ENCODE measurements at regions of chr2 and their contacts with region 1.

Region 1: GRCh38 chr2:149330126-149331022 is at the start of gene LYPD6:
- DNase-seq: peak; percentile 80
- H3K4me3 Mint-ChIP-seq: peak within 1 kb of the TSS; percentile 76
- H3K27ac Mint-ChIP-seq: peak within 1 kb of the TSS; percentile 49
- H3K4me1 Mint-ChIP-seq: peaks cover 8% of the 10 kb centered on the region
- H3K27me3 Mint-ChIP-seq: no peaks in the 10 kb centered on the region
- CTCF ChIP-seq: peak; percentile 11
- total RNA-seq, gene LYPD6: 2.0 and 3.2 TPM in 2 replicates

Region 2: GRCh38 chr2:149490296-149490695 is 159.9 kb after region 1 on chr2:
- CTCF ChIA-PET with region 1: interaction called, 3 read pairs
- POLR2A ChIA-PET with region 1: no interaction called
- intact Hi-C with region 1: loop called (anchors 1 kb)
- DNase-seq: peak; percentile 12
- H3K4me3 Mint-ChIP-seq: no peak overlapping the region
- H3K27ac Mint-ChIP-seq: no peak overlapping the region
- H3K4me1 Mint-ChIP-seq: no peaks in the 10 kb centered on the region
- H3K27me3 Mint-ChIP-seq: peaks cover 24% of the 10 kb centered on the region
- CTCF ChIP-seq: no peak